Head of caudate nucleus (tissue), 42 donors: ENCODE measurements at regions of chr19 and their contacts with region 1.

Region 1: DNA sequence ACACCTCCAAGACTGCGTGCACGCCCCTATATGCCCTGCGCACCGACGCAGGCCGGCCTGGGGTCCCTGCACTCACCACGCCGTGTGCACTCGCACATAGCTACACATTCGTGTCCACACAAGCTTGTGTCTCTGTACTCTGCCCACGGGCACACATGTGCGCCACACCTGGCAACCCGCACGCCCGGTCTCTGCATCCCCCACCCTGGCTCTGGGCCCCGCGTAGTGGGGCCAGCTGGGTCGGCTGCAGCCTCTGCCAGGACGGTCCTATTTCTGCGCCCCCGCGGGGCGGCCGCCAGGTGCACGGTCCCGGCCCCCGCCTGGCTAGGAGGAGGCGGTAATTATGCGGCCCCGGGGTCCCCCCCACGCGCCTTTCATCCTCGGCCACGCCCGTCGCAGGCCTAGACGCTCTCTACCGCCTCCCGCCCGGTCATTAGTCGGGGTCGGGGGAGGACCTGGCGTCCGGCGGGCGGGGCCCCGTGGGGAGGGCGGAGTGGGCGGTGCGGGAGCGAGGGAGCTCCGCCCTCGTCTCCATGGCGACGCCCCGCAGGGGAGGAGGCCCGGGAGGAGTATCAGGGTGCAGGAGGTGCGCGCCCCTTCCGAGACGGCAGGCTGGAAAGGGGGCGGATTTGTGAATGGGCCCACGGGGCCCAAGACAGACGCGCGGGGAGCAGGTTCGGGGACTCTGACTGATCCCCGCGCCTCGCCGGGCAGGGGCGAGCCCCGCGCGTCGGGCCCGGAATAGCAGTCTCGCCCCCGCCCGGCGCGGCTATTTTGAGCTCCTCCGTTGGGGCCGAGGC is 2.8 kb upstream of the CIRBP start:
- DNase-seq: peak in 40 of 42 donors; percentile 69 to 89 (median 80)

Region 2: DNA sequence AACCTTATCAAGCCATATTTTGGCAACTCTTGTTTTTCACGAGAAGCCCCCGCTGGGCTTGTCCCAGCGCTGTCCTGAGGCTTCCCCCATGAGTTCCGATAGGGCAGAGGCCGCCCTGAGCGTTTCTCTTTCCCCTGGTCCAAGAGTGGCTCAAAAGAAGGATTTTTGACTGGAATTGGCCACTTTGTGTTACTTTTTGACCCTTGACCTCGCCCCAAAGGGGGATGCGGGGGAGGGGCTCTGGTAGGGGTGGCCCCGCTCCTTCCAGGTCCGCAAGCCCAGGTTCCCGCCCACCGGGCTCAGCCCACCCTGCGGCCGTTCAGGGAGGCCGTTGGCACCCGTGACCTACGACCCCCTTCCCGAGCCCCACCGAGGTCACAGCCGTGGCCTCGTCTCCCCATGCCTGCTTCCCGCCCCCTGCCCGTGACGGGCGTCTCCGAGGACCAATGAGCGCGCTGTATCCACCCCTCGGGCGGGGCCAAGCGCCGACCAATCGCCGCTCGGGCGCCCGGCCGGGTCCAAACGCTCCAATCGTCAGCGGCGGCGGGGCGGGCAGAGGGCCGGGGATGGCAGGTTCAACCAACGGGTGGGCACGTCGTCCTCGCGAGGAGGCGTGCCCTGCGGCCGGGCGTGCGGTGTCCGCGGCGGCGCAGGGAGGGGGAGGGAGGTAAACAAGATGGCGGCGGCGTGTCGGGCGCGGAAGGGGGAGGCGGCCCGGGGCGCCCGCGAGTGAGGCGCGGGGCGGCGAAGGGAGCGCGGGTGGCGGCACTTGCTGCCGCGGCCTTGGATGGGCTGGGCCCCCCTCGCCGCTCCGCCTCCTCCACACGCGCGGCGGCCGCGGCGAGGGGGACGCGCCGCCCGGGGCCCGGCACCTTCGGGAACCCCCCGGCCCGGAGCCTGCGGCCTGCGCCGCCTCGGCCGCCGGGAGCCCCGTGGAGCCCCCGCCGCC is 60.9 kb before region 1 on chr19 and contains the start of gene STK11:
- intact Hi-C with region 1: no loop called
- DNase-seq: peak; percentile 93 to 100 (median 99)

Region 3: DNA sequence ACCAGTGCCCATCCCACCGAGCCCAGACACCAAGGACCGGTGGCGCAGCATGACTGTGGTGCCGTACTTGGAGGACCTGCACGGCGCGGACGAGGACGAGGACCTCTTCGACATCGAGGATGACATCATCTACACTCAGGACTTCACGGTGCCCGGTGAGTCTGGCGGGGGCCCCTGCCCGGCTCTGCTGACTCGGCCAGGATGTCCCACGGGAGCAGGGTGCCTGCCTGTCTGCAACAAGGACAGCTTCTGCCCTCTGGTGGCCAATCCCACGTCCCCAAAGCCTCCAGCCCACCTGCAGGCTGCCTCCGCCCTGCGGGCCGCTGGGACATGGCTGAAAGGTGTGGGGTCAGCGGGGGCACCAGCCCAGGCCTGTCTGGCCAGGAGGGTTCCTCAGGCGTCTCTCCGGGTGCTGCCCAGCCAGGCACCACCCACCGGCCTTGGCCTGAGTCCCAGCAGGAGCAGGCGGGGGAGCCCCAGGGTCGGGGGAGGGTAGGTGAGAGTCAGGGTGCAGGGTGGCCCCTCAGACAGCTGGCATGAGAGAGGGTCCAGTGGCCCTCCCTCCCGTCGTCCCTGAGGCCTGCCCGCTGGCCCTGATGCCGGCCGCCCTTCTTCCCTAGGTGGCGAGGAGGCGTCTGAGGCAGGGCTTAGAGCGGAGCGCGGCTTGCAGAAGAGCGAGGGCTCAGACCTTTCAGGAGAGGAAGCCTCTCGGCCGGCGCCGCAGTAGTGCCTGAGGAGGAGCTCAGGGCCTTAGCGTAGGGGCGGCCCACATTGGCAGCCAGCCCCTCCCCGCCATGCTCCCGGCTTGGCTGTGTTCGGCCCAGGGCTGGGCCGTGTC is 43.1 kb before region 1 on chr19:
- intact Hi-C with region 1: no loop called
- DNase-seq: peak in 1 of 42 donors; percentile 25

Region 4: GRCh38 chr19:1249298-1249989 is 16.9 kb before region 1 on chr19:
- intact Hi-C with region 1: loop called (anchors 2 kb)
- DNase-seq: peak; percentile 82 to 96 (median 92)

Region 5: GRCh38 chr19:1343041-1343440 is 76.7 kb after region 1 on chr19:
- intact Hi-C with region 1: no loop called
- DNase-seq: no peak